ENCODE measurements at regions of chr2 and their contacts with region 1.

Region 1: DNA sequence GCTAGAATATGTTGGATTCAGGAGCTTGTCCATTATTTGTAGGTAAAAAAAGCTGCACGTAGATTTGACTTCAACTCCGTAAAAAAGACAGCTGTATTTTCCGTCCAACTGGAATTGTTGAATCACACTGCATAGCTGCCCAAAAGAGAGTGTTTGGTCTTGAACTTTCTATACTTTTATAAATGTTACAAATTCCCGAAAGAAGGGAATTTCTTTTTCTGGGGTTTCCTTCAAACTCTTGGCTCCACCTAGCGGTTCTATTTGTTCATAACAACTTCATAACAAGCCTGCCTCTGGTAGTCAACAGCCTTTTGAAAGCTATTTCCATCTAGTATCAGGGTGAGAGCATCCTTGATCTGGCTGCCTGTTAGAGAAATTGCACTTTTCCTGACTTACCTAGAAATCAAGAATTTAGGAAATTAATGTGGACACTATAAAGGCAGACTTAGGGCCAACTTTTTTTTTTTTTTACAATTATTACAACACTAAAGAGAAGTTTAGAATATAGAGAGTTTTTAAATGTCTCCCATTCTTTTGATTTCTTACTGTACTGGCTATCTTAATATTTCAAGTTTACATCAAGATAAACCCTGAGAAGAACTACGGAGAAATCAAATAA is 48.1 kb downstream of the TMEM185B start:
- DNase-seq: no peak
- H3K4me3 Mint-ChIP-seq: no peak overlapping the region
- H3K27ac Mint-ChIP-seq: peak overlapping the region; percentile 50
- H3K4me1 Mint-ChIP-seq: peaks cover 50% of the 10 kb centered on the region
- H3K27me3 Mint-ChIP-seq: no peaks in the 10 kb centered on the region

Region 2: DNA sequence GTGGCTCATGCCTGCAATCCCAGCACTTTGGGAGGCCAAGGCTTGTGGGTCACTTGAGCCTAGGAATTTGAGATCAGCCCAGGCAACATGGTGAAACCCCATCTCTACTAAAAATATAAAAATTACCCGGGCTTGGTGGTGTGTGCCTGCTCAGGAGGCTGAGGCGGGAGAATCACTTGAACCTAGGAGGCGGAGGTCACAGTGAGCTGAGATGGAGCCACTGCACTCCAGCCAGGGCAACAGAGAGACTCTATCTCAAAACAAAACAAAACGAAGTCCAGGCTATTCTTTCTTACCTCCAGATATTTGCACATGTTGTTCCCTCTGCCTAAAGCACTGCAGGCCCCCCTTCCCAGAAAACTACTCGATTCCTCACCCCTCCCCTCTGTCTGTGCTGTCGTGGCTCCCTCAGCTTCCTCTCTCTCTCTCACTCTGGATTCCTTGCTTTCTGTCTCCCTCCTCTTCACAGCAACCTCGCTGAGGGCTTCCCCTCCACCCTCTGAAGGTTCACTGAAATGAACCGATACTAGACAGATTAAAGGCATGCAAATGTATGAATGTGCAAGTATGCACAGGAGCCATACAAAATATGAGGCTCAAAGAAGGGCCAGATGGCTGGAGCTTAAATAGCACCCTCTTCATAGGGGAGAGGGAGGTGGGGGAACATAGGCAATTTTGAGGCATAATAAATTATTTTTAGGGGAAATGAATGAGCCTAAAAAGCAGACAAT is 477.6 kb before region 1 on chr2:
- CTCF ChIA-PET with region 1: interaction called, 32 read pairs
- DNase-seq: peak; percentile 36
- H3K4me3 Mint-ChIP-seq: no peak overlapping the region
- H3K27ac Mint-ChIP-seq: peak overlapping the region; percentile 6
- H3K4me1 Mint-ChIP-seq: peaks cover 36% of the 10 kb centered on the region
- H3K27me3 Mint-ChIP-seq: peaks cover 15% of the 10 kb centered on the region

Region 3: DNA sequence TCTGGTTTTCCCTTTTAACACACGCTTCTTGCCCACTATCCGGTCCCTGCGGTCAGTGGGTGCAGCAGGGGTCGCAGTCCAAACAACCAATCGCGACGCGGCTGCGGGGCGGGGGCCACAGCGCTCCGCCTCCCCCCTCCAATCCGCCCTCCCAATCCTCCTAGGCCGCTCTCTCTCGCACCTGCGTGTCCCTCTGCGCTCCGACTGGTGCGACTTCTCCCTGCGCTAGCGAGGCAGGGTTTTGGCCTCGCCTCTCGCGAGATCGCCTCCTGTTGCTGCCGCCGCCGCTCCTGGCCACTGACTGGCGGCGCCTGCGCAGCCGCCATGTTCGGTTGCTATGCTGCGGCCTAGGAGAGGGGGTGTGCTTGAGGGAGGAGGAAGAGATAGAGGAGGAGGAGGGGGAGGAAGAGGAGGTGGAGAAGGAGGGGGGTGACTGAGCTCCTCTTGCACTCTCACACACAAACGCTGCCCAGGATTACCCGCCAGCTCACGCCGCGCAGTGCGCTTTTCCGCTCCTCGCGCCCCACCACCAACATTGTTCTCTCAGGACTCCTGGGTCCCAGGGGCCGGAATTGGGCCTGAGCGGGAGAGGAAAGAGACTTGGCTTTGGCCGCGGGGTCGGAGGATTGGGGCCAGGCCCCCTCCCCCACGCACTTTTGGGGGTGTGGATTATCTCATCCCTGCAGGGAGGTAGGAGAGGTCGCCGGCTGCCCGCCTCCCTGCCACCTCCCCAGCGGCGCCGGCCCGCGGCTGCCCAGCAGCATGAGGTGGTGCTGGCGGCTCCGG is 415.4 kb before region 1 on chr2 and contains the start of gene PTPN4:
- CTCF ChIA-PET with region 1: interaction called, 58 read pairs
- DNase-seq: peak; percentile 98
- H3K4me3 Mint-ChIP-seq: peak within 1 kb of the TSS; percentile 89
- H3K27ac Mint-ChIP-seq: peak within 1 kb of the TSS; percentile 96
- H3K4me1 Mint-ChIP-seq: peaks cover 38% of the 10 kb centered on the region
- H3K27me3 Mint-ChIP-seq: peaks cover 8% of the 10 kb centered on the region

Region 4: DNA sequence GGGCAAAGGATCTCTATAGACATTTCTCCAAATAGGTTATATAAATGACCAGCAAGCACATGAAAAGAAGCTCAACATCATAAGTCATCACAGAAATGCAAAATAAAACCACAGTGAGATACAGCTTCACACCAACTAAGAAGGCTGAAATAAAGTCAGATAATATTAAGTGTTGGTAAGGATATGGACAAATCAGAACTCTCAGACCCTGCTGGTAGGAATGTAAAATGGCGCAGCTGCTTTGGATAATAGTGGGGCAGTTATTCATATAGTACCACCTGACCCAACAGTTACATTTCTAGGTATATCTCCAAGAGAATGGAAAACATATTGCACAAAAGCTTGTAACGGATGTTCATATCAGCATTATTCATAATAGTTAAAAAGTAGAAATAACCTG is 148.2 kb before region 1 on chr2:
- CTCF ChIA-PET with region 1: no interaction called
- DNase-seq: no peak
- H3K4me3 Mint-ChIP-seq: no peak overlapping the region
- H3K27ac Mint-ChIP-seq: no peak overlapping the region
- H3K4me1 Mint-ChIP-seq: no peaks in the 10 kb centered on the region
- H3K27me3 Mint-ChIP-seq: no peaks in the 10 kb centered on the region

Region 5: DNA sequence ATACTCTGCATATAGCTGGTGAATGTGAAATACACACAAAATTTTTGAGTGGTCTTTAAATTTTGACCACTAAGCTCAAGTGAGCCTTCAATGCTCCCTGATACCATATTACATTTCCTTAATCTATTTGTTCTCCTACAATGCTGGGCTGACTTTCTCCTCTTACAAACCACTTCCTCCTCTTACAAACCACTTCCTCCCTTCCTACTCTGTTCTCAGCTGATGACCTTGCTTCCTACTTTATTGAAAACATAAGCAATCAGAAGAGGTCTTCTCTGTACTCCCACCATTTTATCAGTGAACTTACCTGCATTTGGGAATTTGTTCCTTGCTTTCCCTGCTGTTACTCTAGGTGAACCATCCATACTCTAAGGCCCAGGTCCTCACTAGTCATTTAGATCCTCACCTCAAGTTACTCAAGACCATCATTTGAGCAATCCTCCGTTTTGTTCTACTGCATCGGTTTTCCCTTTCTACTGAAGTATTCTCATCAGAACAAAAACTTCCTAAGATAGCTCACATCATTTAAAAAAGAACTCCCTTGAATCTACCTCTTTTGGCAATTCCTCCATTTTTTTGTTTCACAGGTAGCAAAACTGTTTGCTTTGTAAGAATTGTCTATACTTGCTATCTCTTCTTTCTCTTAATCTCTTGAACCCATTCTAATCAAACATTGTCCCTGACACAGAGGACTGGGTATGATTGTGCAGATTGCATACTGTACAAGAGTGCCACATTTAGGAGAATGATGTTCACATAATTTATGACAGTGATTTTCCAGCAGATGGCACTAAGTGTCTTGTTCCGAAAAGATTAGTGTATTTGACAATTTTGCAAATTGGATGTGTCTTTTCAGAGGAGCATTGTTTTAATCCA is 65.6 kb before region 1 on chr2:
- CTCF ChIA-PET with region 1: interaction called, 74 read pairs
- DNase-seq: peak; percentile 24
- H3K4me3 Mint-ChIP-seq: peak overlapping the region; percentile 40
- H3K27ac Mint-ChIP-seq: peak overlapping the region; percentile 66
- H3K4me1 Mint-ChIP-seq: peaks cover 29% of the 10 kb centered on the region
- H3K27me3 Mint-ChIP-seq: no peaks in the 10 kb centered on the region

Region 6: GRCh38 chr2:120231974-120232635 is 57.0 kb after region 1 on chr2:
- CTCF ChIA-PET with region 1: interaction called, 11 read pairs
- DNase-seq: peak; percentile 88
- H3K4me3 Mint-ChIP-seq: peak overlapping the region; percentile 97
- H3K27ac Mint-ChIP-seq: peak overlapping the region; percentile 96
- H3K4me1 Mint-ChIP-seq: peaks cover 64% of the 10 kb centered on the region
- H3K27me3 Mint-ChIP-seq: peaks cover 5% of the 10 kb centered on the region

Region 7: DNA sequence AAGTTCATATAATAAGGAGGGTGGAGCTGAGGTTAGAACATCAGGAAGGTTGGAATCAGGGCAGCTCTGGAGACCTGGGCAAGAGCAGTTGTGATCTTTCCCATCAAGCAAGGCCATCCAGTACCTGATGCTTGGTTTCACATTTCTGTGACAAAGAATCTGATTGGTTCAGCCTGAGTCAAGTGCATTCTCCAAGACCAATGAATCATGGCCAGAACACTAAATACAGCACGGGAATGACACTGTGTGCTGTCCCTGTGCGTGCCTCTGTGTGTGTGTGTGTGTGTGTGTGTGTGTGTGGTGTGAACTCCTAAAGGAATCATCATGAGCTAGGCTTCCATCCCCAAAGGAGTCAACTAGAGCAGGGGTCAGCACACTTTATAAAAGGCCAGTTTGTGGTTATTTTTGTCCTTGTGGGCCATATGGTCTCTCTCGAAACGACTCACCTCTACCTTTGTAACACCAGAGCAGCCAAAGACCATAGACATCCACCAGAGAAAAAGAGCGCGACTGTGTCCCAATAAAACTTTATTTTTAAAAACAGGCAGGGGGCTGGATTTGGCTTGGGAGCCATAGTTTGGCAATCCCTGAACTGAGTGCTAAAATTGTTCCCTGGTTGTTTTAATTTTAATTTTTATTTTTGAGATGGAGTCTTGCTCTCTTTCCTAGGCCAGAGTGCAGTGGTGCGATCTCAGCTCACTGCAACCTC is 270.5 kb after region 1 on chr2:
- CTCF ChIA-PET with region 1: no interaction called
- DNase-seq: no peak
- H3K4me3 Mint-ChIP-seq: no peak overlapping the region
- H3K27ac Mint-ChIP-seq: no peak overlapping the region
- H3K4me1 Mint-ChIP-seq: peaks cover 14% of the 10 kb centered on the region
- H3K27me3 Mint-ChIP-seq: peaks cover 64% of the 10 kb centered on the region